Left ventricle myocardium superior (tissue), 1 donor: ENCODE measurements at regions of chr2 and their contacts with region 1.

Region 1: DNA sequence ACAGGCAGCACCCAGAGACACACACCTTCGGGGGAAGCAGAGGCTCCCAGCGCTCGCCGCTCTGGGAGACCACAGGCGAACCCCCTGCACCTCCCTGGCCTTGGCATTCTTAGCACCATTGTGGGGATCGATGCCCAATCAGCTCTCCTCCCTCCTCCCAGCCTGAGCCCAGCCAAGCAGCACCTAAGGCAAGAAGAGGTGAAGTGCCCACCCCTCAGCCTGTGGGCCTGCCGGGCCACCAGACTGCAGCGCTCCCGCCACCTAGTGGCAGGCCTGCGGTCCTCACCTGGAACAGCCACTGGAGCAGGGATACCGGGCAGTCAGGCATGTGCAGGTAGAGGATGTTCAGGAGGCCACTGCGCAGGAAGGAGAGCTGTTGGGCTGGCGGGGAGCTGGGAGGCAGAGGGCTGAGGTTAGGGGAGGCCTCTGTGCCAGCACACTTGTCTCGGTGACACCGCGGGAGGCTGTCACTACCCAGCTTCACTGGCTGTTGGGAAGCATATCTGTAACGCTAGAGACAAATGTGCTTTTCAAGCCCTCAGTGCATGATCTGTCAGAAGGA is 35.2 kb downstream of the FAM178B start:
- DNase-seq: peak; percentile 85
- ATAC-seq: peak; percentile 89

Region 2: GRCh38 chr2:96816128-96816835 is 134.9 kb before region 1 on chr2 and contains the start of gene CNNM3:
- intact Hi-C with region 1: no loop called
- DNase-seq: peak; percentile 99
- ATAC-seq: peak; percentile 92
- total RNA-seq, gene CNNM3: 16.8 TPM

Region 3: GRCh38 chr2:96856776-96857673 is 94.1 kb before region 1 on chr2:
- intact Hi-C with region 1: loop called (anchors 5 kb)
- DNase-seq: no peak
- ATAC-seq: peak; percentile 1

Region 4: GRCh38 chr2:96888072-96889011 is 62.8 kb before region 1 on chr2:
- intact Hi-C with region 1: no loop called
- DNase-seq: peak; percentile 67
- ATAC-seq: peak; percentile 75

Region 5: GRCh38 chr2:96907115-96908041 is 43.8 kb before region 1 on chr2:
- intact Hi-C with region 1: loop called (anchors 10 kb)
- DNase-seq: peak; percentile 91
- ATAC-seq: peak; percentile 92